ENCODE measurements at regions of chr12 and their contacts with region 1.

Region 1: GRCh38 chr12:75334384-75335030 is at the start of gene GLIPR1L1:
- DNase-seq: peak; percentile 97
- H3K4me3 ChIP-seq: peak within 1 kb of the TSS; percentile 48 to 63 (median 51)
- H3K27ac ChIP-seq: peak within 1 kb of the TSS in 2 of 4 donors; percentile 36 to 58
- H3K4me1 ChIP-seq: peaks cover 6 to 18% (median 12%) of the 10 kb centered on the region in 4 donors
- H3K27me3 ChIP-seq: no peaks in the 10 kb centered on the region
- CTCF ChIP-seq: peak; percentile 91 to 96 (median 95)
- EP300 ChIP-seq: no peak
- POLR2A ChIP-seq: no peak
- total RNA-seq, gene GLIPR1L1: not detected

Region 2: DNA sequence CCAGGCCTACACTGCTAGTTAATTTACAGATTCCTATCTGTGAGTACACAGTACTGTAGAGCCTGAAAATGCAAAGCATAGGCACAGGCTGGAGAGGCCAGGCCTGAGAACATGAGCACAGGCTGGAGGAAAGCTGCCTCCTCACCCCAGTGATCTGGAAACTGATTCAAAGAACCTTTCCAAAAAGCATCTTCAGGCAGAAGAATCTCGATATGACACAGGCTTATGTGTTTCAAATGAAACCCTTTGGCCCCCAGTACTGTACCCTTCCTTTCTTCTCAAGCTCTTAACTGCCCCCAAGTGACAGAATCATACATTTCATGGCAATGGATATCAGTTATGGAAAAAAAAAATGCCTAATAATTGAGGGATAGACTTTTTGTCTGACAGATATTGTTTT is 246.9 kb before region 1 on chr12:
- intact Hi-C with region 1: no loop called
- DNase-seq: no peak
- H3K4me3 ChIP-seq: no peak overlapping the region
- H3K27ac ChIP-seq: no peak overlapping the region
- H3K4me1 ChIP-seq: no peaks in the 10 kb centered on the region
- H3K27me3 ChIP-seq: no peaks in the 10 kb centered on the region
- CTCF ChIP-seq: no peak
- EP300 ChIP-seq: no peak
- POLR2A ChIP-seq: no peak

Region 3: GRCh38 chr12:75390899-75391538 is 56.5 kb after region 1 on chr12 and contains the start of gene GLIPR1L2:
- intact Hi-C with region 1: loop called (anchors 5 kb)
- DNase-seq: peak; percentile 97
- H3K4me3 ChIP-seq: peak within 1 kb of the TSS; percentile 53 to 68 (median 65)
- H3K27ac ChIP-seq: peak within 1 kb of the TSS; percentile 85 to 93 (median 88)
- H3K4me1 ChIP-seq: peaks cover 23 to 33% (median 32%) of the 10 kb centered on the region in 4 donors
- H3K27me3 ChIP-seq: no peaks in the 10 kb centered on the region
- CTCF ChIP-seq: peak; percentile 74 to 88 (median 80)
- EP300 ChIP-seq: no peak
- POLR2A ChIP-seq: peak; percentile 70
- total RNA-seq, gene GLIPR1L2: 0.17 to 4.5 (median 1.0) TPM

Region 4: DNA sequence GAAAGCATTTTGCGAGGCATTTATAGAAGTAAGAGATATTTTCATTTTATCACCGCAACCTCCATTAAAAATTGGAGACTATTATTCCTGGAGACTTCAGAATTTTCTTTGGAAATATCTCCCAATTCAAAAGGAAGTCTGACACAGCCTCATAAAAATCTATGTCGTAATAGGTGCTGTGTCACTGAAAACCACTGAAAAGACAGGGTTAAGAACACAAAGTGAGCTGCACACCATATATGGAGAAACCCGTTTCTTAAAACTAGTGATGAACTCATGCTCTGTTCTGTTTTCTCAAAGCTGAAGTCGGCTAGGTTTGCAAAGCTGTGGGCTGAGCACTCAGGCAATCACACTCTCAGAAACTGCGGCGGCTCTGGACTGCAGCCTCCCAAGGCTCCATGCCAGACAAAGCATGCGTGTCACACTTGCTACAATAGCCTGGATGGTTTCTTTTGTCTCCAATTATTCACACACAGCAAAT is 146.0 kb after region 1 on chr12 and contains the start of gene GLIPR1:
- intact Hi-C with region 1: loop called (anchors 5 kb)
- DNase-seq: peak; percentile 93
- H3K4me3 ChIP-seq: peak within 1 kb of the TSS; percentile 44 to 66 (median 59)
- H3K27ac ChIP-seq: peak within 1 kb of the TSS; percentile 77 to 84 (median 80)
- H3K4me1 ChIP-seq: peaks cover 0 to 48% (median 39%) of the 10 kb centered on the region in 4 donors
- H3K27me3 ChIP-seq: no peaks in the 10 kb centered on the region
- CTCF ChIP-seq: no peak
- EP300 ChIP-seq: no peak
- POLR2A ChIP-seq: peak; percentile 54
- total RNA-seq, gene GLIPR1: 10.9 to 19.5 (median 15.8) TPM

Region 5: GRCh38 chr12:75505706-75506312 is 171.3 kb after region 1 on chr12:
- intact Hi-C with region 1: loop called (anchors 5 kb)
- DNase-seq: no peak
- H3K4me3 ChIP-seq: no peak overlapping the region
- H3K27ac ChIP-seq: no peak overlapping the region
- H3K4me1 ChIP-seq: peaks cover 16 to 29% (median 26%) of the 10 kb centered on the region in 4 donors
- H3K27me3 ChIP-seq: no peaks in the 10 kb centered on the region
- CTCF ChIP-seq: peak; percentile 38 to 57 (median 52)
- EP300 ChIP-seq: no peak
- POLR2A ChIP-seq: no peak

Region 6: DNA sequence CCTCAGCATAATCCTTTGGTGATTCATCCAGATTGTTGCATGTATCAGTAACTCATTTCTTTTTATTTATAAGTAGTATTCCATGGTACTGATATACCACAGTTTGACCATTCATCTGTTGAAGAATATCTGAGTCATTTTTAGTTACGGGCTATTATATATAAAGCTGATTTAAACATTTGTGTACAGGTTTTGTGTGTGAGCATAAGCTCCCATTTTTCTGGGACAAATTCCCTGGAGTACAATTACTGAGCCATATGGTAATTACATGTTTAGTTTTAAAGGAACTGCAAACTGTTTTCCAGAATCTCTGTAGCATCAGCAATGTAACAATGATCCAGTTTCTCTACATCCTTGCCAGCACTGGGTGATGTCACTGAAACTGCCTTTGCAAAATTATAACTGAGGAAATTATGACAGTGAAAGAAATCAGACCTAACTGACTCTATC is 413.1 kb after region 1 on chr12:
- intact Hi-C with region 1: no loop called
- DNase-seq: no peak
- H3K4me3 ChIP-seq: no peak overlapping the region
- H3K27ac ChIP-seq: no peak overlapping the region
- H3K4me1 ChIP-seq: peaks cover 0 to 9% (median 7%) of the 10 kb centered on the region in 4 donors
- H3K27me3 ChIP-seq: no peaks in the 10 kb centered on the region
- CTCF ChIP-seq: no peak
- EP300 ChIP-seq: no peak
- POLR2A ChIP-seq: no peak